ENCODE measurements at regions of chr16 and their contacts with region 1.

Region 1: DNA sequence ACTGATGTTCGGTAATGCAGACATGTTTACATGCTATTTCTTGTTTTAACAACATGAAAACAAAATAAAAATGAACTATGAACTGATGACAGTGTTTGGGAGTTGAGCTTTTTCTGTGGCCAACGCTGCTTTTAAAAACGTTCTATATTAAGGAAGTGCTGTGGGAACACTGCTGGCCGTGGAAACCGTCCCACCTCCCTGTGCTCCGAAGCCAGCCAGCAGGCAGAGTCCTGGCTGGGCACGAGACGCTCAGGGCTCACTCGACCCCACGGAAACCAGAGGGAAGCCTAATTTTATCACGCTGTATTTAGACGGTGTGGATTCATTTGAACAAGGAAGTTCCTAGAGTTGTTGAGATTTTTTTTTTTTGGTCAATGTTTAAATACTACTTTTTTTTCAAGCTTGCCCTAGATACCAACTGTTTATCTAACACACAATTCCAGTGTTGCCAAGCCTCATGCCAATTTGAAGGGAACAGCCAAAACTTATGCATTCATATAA is 25.8 kb downstream of the ADCY9 start:
- DNase-seq: no peak
- H3K4me3 ChIP-seq: peak overlapping the region; percentile 5 to 27 (median 20)
- H3K27ac ChIP-seq: peak overlapping the region; percentile 46 to 71 (median 63)
- H3K4me1 ChIP-seq: peaks cover 20 to 70% (median 67%) of the 10 kb centered on the region in 4 donors
- H3K27me3 ChIP-seq: no peaks in the 10 kb centered on the region
- CTCF ChIP-seq: no peak
- EP300 ChIP-seq: no peak
- POLR2A ChIP-seq: no peak

Region 2: DNA sequence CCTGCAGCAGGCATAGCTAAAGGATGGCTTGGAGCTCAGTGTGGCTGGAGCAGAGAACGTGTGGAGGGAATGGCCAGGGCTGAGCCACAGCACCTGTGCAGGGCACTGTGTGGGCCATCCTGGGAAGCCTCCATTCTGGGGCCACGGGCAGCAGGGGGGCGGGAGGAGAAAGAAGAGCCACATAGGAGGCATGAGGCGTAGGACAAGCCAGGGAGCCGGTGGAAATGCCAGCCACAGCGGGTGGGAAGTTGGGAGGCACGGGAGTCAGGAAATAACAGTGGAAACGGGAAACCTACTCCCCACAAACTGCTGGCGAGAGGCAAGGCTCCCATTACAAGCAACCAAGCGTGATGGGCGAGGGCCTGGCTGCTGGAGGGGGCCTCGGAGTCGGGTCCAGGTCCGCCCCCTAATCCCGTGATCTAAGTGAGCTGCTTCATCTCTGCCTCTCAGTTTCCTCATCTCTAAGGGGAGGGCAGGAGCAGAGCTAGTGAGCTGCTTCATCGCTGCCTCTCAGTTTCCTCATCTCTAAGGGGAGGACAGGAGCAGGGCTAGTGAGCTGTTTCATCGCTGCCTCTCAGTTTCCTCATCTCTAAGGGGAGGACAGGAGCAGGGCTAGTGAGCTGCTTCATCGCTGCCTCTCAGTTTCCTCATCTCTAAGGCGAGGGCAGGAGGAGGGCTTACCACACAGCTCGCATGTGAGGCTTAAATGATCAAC is 79.0 kb before region 1 on chr16:
- intact Hi-C with region 1: loop called (anchors 5 kb)
- DNase-seq: no peak
- H3K4me3 ChIP-seq: no peak overlapping the region
- H3K27ac ChIP-seq: peak overlapping the region; percentile 27 to 50 (median 40)
- H3K4me1 ChIP-seq: peaks cover 0 to 39% (median 33%) of the 10 kb centered on the region in 4 donors
- H3K27me3 ChIP-seq: no peaks in the 10 kb centered on the region
- CTCF ChIP-seq: no peak
- EP300 ChIP-seq: no peak
- POLR2A ChIP-seq: no peak

Measured in esophagus muscularis mucosa (tissue), 4 donors.